Transverse colon (tissue), 4 donors: ENCODE measurements at regions of chr18 and their contacts with region 1.

Region 1: DNA sequence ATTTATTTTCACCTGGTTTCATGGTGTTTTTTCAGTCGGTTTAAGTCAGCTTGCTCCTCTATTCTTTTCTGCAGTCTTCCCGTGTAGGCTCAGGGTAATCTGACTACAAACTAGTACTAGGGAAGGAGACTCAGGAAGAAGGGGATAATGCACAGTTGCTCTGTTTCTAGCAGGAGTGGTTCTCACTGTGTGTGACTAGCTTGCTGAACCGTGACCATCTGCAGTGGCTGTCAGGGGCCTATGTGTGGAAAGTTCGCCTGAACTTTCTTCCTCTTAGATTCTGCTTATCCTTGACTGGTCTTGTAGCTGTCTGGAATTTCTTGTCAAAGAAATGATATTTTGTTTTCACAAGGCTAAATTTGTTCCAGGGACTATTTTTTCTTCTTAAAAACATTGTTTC is 46.3 kb upstream of the AQP4 start:
- DNase-seq: no peak
- H3K4me3 ChIP-seq: no peak overlapping the region
- H3K27ac ChIP-seq: no peak overlapping the region
- H3K4me1 ChIP-seq: no peaks in the 10 kb centered on the region
- H3K27me3 ChIP-seq: no peaks in the 10 kb centered on the region
- CTCF ChIP-seq: no peak
- EP300 ChIP-seq: no peak
- POLR2A ChIP-seq: no peak

Region 2: DNA sequence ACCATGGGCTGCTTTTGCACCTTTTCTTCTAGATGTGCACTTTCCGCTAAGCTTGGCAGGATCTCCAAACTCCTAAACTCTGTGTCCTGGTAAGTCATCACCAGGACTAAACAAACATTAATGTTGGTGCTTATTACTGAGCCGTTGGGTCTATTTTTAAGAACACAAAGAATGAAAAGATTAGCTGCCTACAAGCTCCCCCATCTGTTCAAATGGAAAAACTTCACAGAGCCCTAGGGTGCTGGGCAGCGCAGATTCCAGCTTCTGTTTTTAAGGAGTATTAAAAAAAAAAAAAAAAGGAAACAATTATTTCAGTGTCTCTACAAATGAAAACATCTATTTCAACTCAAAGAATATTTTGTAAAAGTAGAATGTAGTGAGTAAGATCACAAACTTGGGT is 51.5 kb after region 1 on chr18:
- in situ Hi-C with region 1: no loop called
- intact Hi-C with region 1: loop called (anchors 1 kb)
- DNase-seq: no peak
- H3K4me3 ChIP-seq: no peak overlapping the region
- H3K27ac ChIP-seq: no peak overlapping the region
- H3K4me1 ChIP-seq: no peaks in the 10 kb centered on the region
- H3K27me3 ChIP-seq: no peaks in the 10 kb centered on the region
- CTCF ChIP-seq: peak in 1 of 5 experiments; percentile 8
- EP300 ChIP-seq: no peak
- POLR2A ChIP-seq: no peak